ENCODE measurements at regions of chr16 and their contacts with region 1.

Region 1: DNA sequence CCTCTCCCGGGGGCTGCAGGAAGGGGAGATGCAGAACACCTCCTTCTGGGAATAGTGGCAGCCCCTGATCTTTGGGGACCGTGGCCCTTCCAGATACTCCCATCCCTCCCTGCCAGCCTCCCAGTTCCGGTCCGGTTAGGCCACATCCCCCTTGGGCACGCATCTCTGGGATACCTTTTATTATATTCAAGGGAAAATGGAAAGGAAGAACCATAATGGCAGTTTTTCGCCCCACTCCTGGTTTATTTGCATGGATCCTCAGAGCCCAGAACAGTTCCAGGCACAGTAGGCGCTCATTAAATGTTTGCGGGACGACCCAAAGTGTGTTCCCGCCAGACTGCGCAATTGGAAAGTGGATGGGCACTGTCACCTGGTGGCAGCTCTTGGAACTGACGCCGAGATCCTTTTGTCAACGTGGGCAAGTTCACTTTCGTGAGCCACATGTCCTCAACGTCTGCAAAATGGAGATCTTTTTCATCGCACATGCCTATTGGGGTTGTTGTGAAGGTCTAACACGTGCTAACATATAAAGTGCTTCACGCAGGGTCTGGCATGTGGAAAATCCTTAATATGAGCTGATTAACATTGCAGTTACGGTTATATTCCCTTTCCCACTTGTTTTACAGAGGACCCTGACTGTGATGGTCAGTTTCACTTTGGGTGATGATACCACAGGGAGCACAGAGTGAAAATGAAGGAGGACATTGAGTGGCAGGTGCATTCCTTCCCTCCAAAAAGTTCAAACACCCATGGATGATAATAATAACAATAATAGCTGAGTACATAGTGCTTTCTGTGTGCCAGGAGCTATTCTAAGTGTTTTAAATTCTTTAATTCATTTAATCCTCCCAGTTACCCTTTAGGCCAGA is 1.7 kb upstream of the GPRC5B start:
- DNase-seq: peak; percentile 75
- CTCF ChIP-seq: peak; percentile 96

Region 2: GRCh38 chr16:19389246-19389645 is 497.1 kb before region 1 on chr16:
- CTCF ChIA-PET with region 1: interaction called, 12 read pairs
- POLR2A ChIA-PET with region 1: no interaction called
- DNase-seq: peak; percentile 57
- CTCF ChIP-seq: peak; percentile 61

Region 3: GRCh38 chr16:19555162-19555937 is 331.0 kb before region 1 on chr16 and contains the start of gene VPS35L:
- CTCF ChIA-PET with region 1: interaction called, 40 read pairs
- POLR2A ChIA-PET with region 1: no interaction called
- DNase-seq: peak; percentile 93
- CTCF ChIP-seq: peak; percentile 63

Region 4: DNA sequence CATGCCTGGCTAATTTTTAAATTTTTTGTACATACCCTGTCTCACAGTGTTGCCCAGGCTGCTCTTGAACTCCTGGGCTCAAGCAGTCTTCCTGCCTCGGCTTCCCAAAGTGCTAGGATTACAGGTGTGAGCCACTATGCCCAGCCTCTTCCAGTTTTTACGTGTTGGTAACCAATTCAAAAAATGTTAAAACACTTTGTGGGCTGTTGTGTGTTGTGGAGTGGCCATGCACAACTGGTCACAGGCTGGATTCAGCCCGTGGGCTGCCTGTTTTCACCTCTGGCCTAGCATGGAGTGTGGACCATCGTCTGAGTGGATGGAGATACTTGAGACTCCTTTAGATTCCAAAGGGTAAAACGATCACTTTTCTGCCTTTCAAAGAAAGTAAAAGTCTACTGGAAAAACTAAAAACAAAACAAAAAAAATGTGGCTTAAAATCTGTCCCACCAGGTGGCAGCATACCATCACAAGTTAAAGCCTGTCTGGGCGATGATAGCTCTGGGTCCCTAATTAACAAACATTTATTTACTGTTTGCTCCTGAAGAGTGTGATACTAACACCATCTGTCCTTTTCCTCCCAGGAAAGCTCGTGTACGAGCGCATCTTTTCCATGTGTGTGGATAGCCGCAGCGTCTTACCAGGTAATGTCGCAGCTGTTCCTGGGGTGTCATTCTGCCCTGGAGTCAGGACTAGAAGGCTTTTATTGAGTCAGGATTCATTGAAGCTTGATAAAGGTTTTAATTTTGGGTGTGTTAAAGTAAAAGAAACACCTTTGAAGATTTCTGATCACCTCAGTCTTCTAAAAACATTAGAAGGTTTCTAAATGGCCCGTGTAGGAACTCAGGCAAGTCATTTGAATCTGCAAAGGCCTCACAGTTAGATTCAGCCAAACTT is 285.0 kb before region 1 on chr16:
- CTCF ChIA-PET with region 1: interaction called, 65 read pairs
- POLR2A ChIA-PET with region 1: no interaction called
- DNase-seq: peak; percentile 24
- CTCF ChIP-seq: peak; percentile 47

Region 5: DNA sequence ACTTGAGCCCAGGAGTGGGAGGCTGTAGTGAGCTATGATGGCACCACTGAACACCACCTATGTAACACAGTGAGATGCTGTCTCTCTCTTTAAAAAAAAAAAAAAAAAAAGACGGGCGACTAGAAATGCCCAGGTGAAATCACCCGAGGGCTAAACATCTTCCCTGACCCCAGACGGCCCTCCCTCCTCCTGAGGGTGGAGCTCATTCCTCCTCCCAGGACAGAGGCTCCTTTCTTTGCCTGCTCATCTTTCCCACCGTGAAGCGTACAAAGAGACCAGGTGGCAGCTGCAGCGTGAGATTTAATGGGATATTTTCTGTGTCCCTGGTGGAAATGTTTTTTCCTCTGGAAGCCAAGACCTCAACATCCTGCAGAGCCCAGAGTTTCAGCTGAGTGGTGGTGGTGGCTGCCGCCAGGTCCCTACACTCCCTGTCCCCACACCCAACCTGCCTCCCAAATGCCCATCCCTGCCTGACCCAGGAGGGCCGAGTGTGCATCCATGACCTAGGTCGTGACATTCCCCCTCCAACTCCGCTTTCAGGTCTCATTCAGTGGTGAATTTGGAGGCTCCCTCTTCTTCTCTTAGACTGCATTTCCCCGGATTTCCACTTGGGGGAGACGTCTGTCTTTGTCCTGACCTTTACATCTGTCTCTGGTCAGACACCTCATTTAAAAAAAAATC is 12.8 kb after region 1 on chr16:
- CTCF ChIA-PET with region 1: interaction called, 40 read pairs
- POLR2A ChIA-PET with region 1: no interaction called
- DNase-seq: peak; percentile 67
- CTCF ChIP-seq: peak; percentile 68

Region 6: GRCh38 chr16:19907161-19907992 is 21.1 kb after region 1 on chr16:
- CTCF ChIA-PET with region 1: interaction called, 11 read pairs
- POLR2A ChIA-PET with region 1: no interaction called
- DNase-seq: peak; percentile 76
- CTCF ChIP-seq: peak; percentile 92